Tibial artery (tissue), 4 donors: ENCODE measurements at regions of chr7 and their contacts with region 1.

Region 1: GRCh38 chr7:123557398-123558288 is at the start of gene NDUFA5:
- DNase-seq: peak; percentile 98 to 99
- H3K4me3 ChIP-seq: peak within 1 kb of the TSS; percentile 94 to 96
- H3K27ac ChIP-seq: peak within 1 kb of the TSS; percentile 88 to 94
- H3K4me1 ChIP-seq: peaks cover 0 to 33% (median 18%) of the 10 kb centered on the region in 4 donors
- H3K27me3 ChIP-seq: no peaks in the 10 kb centered on the region
- CTCF ChIP-seq: no peak

Region 2: GRCh38 chr7:123538189-123538714 is 19.4 kb before region 1 on chr7:
- intact Hi-C with region 1: loop called (anchors 1 kb)
- DNase-seq: no peak
- H3K4me3 ChIP-seq: no peak overlapping the region
- H3K27ac ChIP-seq: no peak overlapping the region
- H3K4me1 ChIP-seq: peaks cover 0 to 12% (median 8%) of the 10 kb centered on the region in 4 donors
- H3K27me3 ChIP-seq: no peaks in the 10 kb centered on the region
- CTCF ChIP-seq: no peak